SK-N-SH (cell line): ENCODE measurements at regions of chr1 and their contacts with region 1.

Region 1: GRCh38 chr1:225474986-225475820 is 47.4 kb upstream of the LBR start:
- DNase-seq: peak; percentile 93
- H3K4me3 ChIP-seq: peak overlapping the region; percentile 17 to 46; a peak in 2 of 4 replicates
- H3K27ac ChIP-seq: no peak overlapping the region
- H3K4me1 ChIP-seq: peaks cover 0 to 6% of the 10 kb centered on the region in 2 experiments; a peak in 2 of 4 replicates
- H3K27me3 ChIP-seq: no peaks in the 10 kb centered on the region
- CTCF ChIP-seq: peak; percentile 100
- EP300 ChIP-seq: no peak
- RAD21 ChIP-seq: peak; percentile 100

Region 2: GRCh38 chr1:225447650-225448089 is 27.5 kb before region 1 on chr1:
- CTCF ChIA-PET with region 1: interaction called, 15 read pairs
- POLR2A ChIA-PET with region 1: no interaction called
- DNase-seq: no peak
- H3K4me3 ChIP-seq: no peak overlapping the region
- H3K27ac ChIP-seq: no peak overlapping the region
- H3K4me1 ChIP-seq: peaks cover 4 to 5% of the 10 kb centered on the region in 2 experiments; a peak in 2 of 4 replicates
- H3K27me3 ChIP-seq: no peaks in the 10 kb centered on the region
- CTCF ChIP-seq: no peak
- EP300 ChIP-seq: no peak
- RAD21 ChIP-seq: no peak

Region 3: DNA sequence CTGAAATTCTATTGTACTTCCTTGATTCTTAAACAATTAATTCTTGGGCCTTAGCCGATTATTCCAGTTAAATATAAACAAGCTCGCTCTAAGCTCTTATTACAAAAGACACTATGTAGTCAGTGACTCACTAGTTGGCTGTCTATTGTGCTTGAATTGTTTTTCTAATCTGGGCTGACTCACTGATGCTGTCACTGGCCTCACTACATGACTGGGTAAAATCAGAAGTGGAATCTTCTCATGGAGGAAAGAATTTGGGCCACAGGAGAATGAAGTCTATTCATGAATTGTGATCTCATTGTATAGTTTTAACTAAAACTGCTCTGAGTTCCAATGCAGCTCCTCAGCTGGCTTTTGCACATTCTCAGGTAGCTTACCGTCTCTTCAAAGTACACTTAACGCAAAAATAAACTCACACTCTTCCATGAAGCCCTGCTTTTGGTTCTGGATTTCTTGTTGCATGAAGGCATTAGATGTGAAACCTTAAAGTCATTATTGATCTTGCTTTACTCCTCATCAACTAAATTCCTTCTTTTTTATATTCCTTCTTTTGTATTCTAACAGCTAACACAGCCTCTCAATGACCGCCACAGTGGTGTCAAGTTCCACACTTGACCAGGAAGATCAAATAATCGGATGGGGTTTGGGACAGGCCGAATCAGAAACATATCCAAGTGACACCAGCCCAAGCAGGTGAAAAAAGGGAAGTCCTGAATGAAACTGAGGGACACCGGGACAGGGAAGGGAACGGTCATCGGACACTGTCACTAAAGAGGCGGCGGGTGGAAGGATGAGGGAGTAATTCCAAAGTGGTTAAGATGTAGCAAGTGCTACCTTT is 33.6 kb after region 1 on chr1:
- CTCF ChIA-PET with region 1: interaction called, 33 read pairs
- POLR2A ChIA-PET with region 1: no interaction called
- DNase-seq: no peak
- H3K4me3 ChIP-seq: no peak overlapping the region
- H3K27ac ChIP-seq: peak overlapping the region; percentile 64 to 96
- H3K4me1 ChIP-seq: peaks cover 5 to 19% of the 10 kb centered on the region in 2 experiments; a peak in 3 of 4 replicates
- H3K27me3 ChIP-seq: no peaks in the 10 kb centered on the region
- CTCF ChIP-seq: no peak
- EP300 ChIP-seq: peak in 1 of 2 experiments; percentile 77; a peak in 3 of 4 replicates
- RAD21 ChIP-seq: no peak

Region 4: DNA sequence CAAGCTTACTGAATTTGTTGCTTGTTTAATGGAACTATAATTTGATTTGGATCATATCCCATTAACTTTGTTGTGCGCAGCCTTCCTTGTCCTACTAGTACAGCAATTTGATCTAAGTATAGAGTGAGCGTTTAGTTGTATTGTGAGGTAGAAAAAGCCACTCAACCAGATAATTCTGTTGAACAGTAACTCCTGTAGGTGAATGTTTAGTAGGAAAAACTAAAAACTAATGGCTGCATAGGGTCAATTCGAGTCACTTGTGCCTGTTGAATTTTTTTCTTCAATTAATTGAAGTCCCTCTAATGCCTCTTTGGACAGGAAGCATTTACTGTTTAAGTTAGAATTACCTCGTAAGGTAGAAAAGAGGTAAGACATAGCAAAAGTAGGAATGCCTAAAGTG is 319.8 kb after region 1 on chr1:
- CTCF ChIA-PET with region 1: interaction called, 12 read pairs
- POLR2A ChIA-PET with region 1: no interaction called
- DNase-seq: no peak
- H3K4me3 ChIP-seq: no peak overlapping the region
- H3K27ac ChIP-seq: no peak overlapping the region
- H3K4me1 ChIP-seq: no peaks in the 10 kb centered on the region
- H3K27me3 ChIP-seq: no peaks in the 10 kb centered on the region
- CTCF ChIP-seq: no peak
- EP300 ChIP-seq: no peak
- RAD21 ChIP-seq: no peak

Region 5: GRCh38 chr1:225857256-225857655 is 382.1 kb after region 1 on chr1:
- CTCF ChIA-PET with region 1: interaction called, 11 read pairs
- POLR2A ChIA-PET with region 1: no interaction called
- DNase-seq: no peak
- H3K4me3 ChIP-seq: no peak overlapping the region
- H3K27ac ChIP-seq: no peak overlapping the region
- H3K4me1 ChIP-seq: no peaks in the 10 kb centered on the region
- H3K27me3 ChIP-seq: no peaks in the 10 kb centered on the region
- CTCF ChIP-seq: no peak
- EP300 ChIP-seq: no peak
- RAD21 ChIP-seq: no peak

Region 6: GRCh38 chr1:225942574-225942973 is 467.4 kb after region 1 on chr1:
- CTCF ChIA-PET with region 1: interaction called, 15 read pairs
- POLR2A ChIA-PET with region 1: no interaction called
- DNase-seq: no peak
- H3K4me3 ChIP-seq: no peak overlapping the region
- H3K27ac ChIP-seq: no peak overlapping the region
- H3K4me1 ChIP-seq: peaks cover 0 to 16% of the 10 kb centered on the region in 2 experiments; a peak in 1 of 4 replicates
- H3K27me3 ChIP-seq: no peaks in the 10 kb centered on the region; the same call in 1 of the 2 replicates
- CTCF ChIP-seq: no peak
- EP300 ChIP-seq: no peak
- RAD21 ChIP-seq: no peak

Region 7: DNA sequence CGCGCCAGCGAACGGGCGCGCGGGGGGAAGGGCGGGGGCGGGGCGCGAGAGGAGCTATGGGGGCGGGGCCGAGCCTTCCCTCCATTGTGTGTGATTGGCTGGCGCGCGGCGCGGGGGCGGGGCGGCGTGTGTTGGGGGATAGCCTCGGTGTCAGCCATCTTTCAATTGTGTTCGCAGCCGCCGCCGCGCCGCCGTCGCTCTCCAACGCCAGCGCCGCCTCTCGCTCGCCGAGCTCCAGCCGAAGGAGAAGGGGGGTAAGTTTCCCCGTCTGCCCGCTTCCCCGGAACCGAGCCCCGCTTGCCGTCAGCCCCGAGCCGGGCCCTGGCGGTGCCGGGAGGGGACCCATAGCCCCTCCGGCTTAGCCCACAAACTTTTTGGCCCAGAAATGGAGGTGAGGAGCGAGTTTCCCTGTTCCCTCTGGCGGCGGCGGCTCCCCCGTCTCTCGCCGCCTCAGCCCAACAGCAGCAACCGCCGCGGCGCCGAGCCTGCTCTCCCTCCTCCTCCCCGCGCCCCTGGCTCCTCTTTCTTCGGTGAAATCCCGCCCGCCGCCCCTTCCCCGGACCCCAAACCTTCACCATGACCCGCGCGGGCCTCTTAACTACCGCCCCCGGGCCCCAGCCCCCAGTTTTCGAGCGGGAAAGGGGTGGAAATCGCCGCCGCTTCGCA is 587.5 kb after region 1 on chr1 and contains the start of gene H3-3A:
- CTCF ChIA-PET with region 1: interaction called, 11 read pairs
- POLR2A ChIA-PET with region 1: no interaction called
- DNase-seq: peak; percentile 96
- H3K4me3 ChIP-seq: peak within 1 kb of the TSS; percentile 85 to 94
- H3K27ac ChIP-seq: peak within 1 kb of the TSS; percentile 99
- H3K4me1 ChIP-seq: peaks cover 23 to 33% of the 10 kb centered on the region in 2 experiments; a peak in 3 of 4 replicates
- H3K27me3 ChIP-seq: no peaks in the 10 kb centered on the region
- CTCF ChIP-seq: no peak
- EP300 ChIP-seq: peak in 1 of 2 experiments; percentile 26; a peak in 1 of 4 replicates
- RAD21 ChIP-seq: no peak
- polyA plus RNA-seq, gene H3-3A: 315 and 370 TPM in 2 replicates